Naive thymus-derived CD4-positive, alpha-beta T cell (primary cell): ENCODE measurements at regions of chr4 and their contacts with region 1.

Region 1: GRCh38 chr4:108433832-108434231 is 186.5 kb upstream of the RPL34 start:
- DNase-seq: peak in 8 of 9 donors; percentile 48 to 83 (median 72)
- ATAC-seq: peak; percentile 81
- H3K4me3 ChIP-seq: peak overlapping the region; percentile 55
- H3K4me3 Mint-ChIP-seq: peak overlapping the region; percentile 14 to 78 (median 66)
- H3K27ac ChIP-seq: peak overlapping the region; percentile 21
- H3K27ac Mint-ChIP-seq: peak overlapping the region; percentile 70 to 92 (median 86)
- H3K4me1 ChIP-seq: peaks cover 18 to 35% of the 10 kb centered on the region in 2 donors
- H3K4me1 Mint-ChIP-seq: peaks cover 26 to 86% (median 64%) of the 10 kb centered on the region in 7 donors
- H3K27me3 ChIP-seq: no peaks in the 10 kb centered on the region
- H3K27me3 Mint-ChIP-seq: peaks cover 0 to 2% (median 0%) of the 10 kb centered on the region in 5 donors

Region 2: DNA sequence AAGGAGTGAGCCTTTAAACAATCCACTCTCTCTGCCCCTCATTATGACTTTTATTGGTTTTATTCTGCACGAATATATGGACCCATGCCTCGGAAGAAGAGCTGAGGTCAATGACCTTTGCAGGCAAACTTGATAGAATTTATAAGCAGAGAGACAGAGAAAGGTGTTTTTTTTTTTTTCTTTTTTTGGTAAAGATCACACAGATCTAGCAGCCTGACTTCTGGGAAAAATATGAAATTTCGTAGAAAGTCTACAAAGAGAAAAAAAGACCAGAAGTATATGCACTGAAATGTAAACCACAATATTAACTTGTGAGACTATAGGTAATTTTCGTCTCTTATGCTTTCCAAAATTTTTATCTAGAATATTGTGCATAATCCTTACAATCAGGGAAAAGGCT is 326.7 kb before region 1 on chr4:
- CTCF ChIA-PET with region 1: no interaction called
- POLR2A ChIA-PET with region 1: no interaction called
- intact Hi-C with region 1: no loop called
- DNase-seq: peak in 3 of 9 donors; percentile 40 to 51 (median 45)
- ATAC-seq: no peak
- H3K4me3 ChIP-seq: peak overlapping the region; percentile 10
- H3K4me3 Mint-ChIP-seq: peak overlapping the region; percentile 69 to 89 (median 77)
- H3K27ac ChIP-seq: peak overlapping the region; percentile 80
- H3K27ac Mint-ChIP-seq: peak overlapping the region; percentile 75 to 98 (median 91)
- H3K4me1 ChIP-seq: peaks cover 47 to 95% of the 10 kb centered on the region in 2 donors
- H3K4me1 Mint-ChIP-seq: peaks cover 63 to 97% (median 93%) of the 10 kb centered on the region in 7 donors
- H3K27me3 ChIP-seq: no peaks in the 10 kb centered on the region
- H3K27me3 Mint-ChIP-seq: no peaks in the 10 kb centered on the region

Region 3: GRCh38 chr4:108118490-108118889 is 315.3 kb before region 1 on chr4:
- CTCF ChIA-PET with region 1: no interaction called
- POLR2A ChIA-PET with region 1: interaction called, 3 read pairs
- intact Hi-C with region 1: loop called in 1 of 2 experiments (anchors 5 kb)
- DNase-seq: peak in 1 of 9 donors; percentile 74
- ATAC-seq: peak; percentile 59
- H3K4me3 ChIP-seq: no peak overlapping the region
- H3K4me3 Mint-ChIP-seq: peak overlapping the region in 9 of 10 donors; percentile 57 to 89 (median 77)
- H3K27ac ChIP-seq: peak overlapping the region; percentile 80
- H3K27ac Mint-ChIP-seq: peak overlapping the region; percentile 84 to 98 (median 90)
- H3K4me1 ChIP-seq: peaks cover 58 to 97% of the 10 kb centered on the region in 2 donors
- H3K4me1 Mint-ChIP-seq: peaks cover 61 to 99% (median 97%) of the 10 kb centered on the region in 7 donors
- H3K27me3 ChIP-seq: no peaks in the 10 kb centered on the region
- H3K27me3 Mint-ChIP-seq: no peaks in the 10 kb centered on the region

Region 4: GRCh38 chr4:108159845-108160244 is 274.0 kb before region 1 on chr4:
- CTCF ChIA-PET with region 1: no interaction called
- POLR2A ChIA-PET with region 1: no interaction called
- intact Hi-C with region 1: no loop called
- DNase-seq: peak in 4 of 9 donors; percentile 32 to 61 (median 52)
- ATAC-seq: peak; percentile 69
- H3K4me3 ChIP-seq: peak overlapping the region; percentile 77
- H3K4me3 Mint-ChIP-seq: peak overlapping the region; percentile 83 to 100 (median 97)
- H3K27ac ChIP-seq: peak overlapping the region; percentile 87
- H3K27ac Mint-ChIP-seq: peak overlapping the region; percentile 72 to 97 (median 92)
- H3K4me1 ChIP-seq: peaks cover 40 to 41% of the 10 kb centered on the region in 2 donors
- H3K4me1 Mint-ChIP-seq: peaks cover 13 to 77% (median 54%) of the 10 kb centered on the region in 7 donors
- H3K27me3 ChIP-seq: no peaks in the 10 kb centered on the region
- H3K27me3 Mint-ChIP-seq: no peaks in the 10 kb centered on the region

Region 5: GRCh38 chr4:108287834-108288413 is 145.9 kb before region 1 on chr4:
- CTCF ChIA-PET with region 1: no interaction called
- POLR2A ChIA-PET with region 1: no interaction called
- intact Hi-C with region 1: no loop called
- DNase-seq: no peak
- ATAC-seq: no peak
- H3K4me3 ChIP-seq: no peak overlapping the region
- H3K4me3 Mint-ChIP-seq: no peak overlapping the region
- H3K27ac ChIP-seq: no peak overlapping the region
- H3K27ac Mint-ChIP-seq: peak overlapping the region in 2 of 9 donors; percentile 4 to 23
- H3K4me1 ChIP-seq: no peaks in the 10 kb centered on the region
- H3K4me1 Mint-ChIP-seq: peaks cover 4 to 39% (median 23%) of the 10 kb centered on the region in 7 donors
- H3K27me3 ChIP-seq: no peaks in the 10 kb centered on the region
- H3K27me3 Mint-ChIP-seq: peaks cover 0 to 12% (median 0%) of the 10 kb centered on the region in 5 donors

Region 6: GRCh38 chr4:108355186-108355901 is 78.5 kb before region 1 on chr4:
- CTCF ChIA-PET with region 1: no interaction called
- POLR2A ChIA-PET with region 1: no interaction called
- intact Hi-C with region 1: loop called (anchors 1 kb)
- DNase-seq: peak in 8 of 9 donors; percentile 28 to 92 (median 86)
- ATAC-seq: peak; percentile 90
- H3K4me3 ChIP-seq: peak overlapping the region; percentile 20
- H3K4me3 Mint-ChIP-seq: peak overlapping the region; percentile 57 to 87 (median 70)
- H3K27ac ChIP-seq: peak overlapping the region; percentile 86
- H3K27ac Mint-ChIP-seq: peak overlapping the region; percentile 76 to 99 (median 96)
- H3K4me1 ChIP-seq: peaks cover 17 to 59% of the 10 kb centered on the region in 2 donors
- H3K4me1 Mint-ChIP-seq: peaks cover 34 to 96% (median 83%) of the 10 kb centered on the region in 7 donors
- H3K27me3 ChIP-seq: no peaks in the 10 kb centered on the region
- H3K27me3 Mint-ChIP-seq: peaks cover 0 to 14% (median 0%) of the 10 kb centered on the region in 5 donors

Region 7: DNA sequence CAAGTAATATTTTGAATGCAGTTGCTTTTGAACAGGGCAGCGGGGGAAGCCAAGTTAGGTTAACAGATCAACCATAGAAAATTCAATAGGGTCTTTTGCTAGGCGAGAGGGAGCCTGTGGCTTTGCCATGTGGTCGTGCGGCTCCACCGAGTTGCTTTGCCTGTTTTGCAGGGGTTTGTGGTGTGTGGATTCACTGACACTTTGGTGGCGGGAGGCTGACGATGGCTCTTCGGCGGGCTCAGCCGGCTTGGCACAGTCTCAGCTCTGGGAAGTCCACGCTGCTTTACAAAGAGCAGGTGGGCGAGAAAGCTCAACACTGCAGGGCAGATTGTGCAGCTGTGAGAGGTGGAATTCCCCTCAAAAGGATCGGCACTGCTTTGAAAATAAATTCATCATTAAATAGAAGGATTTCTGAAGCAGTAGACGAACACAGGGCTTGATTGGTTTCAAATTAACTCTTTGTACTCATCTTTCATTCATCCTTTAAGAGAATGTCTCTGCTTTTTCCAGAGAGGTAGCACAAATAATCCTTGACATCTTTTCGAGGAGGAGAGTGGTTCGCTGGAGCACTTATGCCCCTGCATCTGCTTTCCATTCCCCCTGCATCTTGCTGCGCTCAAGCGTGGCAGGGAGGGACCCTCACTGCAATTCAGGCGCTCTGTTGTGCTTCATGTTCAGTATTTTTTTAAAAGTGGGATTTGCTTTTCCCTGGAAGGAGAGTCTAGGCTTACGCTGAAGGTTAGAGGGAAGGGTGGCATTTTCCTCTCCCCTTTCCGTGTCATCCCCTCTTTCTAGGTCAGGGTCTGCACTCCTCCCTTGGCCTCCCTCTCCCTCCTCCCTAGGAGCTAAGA is 63.3 kb before region 1 on chr4:
- CTCF ChIA-PET with region 1: no interaction called
- POLR2A ChIA-PET with region 1: no interaction called
- intact Hi-C with region 1: loop called in 1 of 2 experiments (anchors 5 kb)
- DNase-seq: peak in 5 of 9 donors; percentile 20 to 46 (median 30)
- ATAC-seq: peak; percentile 74
- H3K4me3 ChIP-seq: peak overlapping the region; percentile 33
- H3K4me3 Mint-ChIP-seq: peak overlapping the region; percentile 74 to 94 (median 89)
- H3K27ac ChIP-seq: peak overlapping the region; percentile 9
- H3K27ac Mint-ChIP-seq: peak overlapping the region; percentile 52 to 94 (median 84)
- H3K4me1 ChIP-seq: peaks cover 9 to 24% of the 10 kb centered on the region in 2 donors
- H3K4me1 Mint-ChIP-seq: peaks cover 34 to 82% (median 58%) of the 10 kb centered on the region in 7 donors
- H3K27me3 ChIP-seq: no peaks in the 10 kb centered on the region
- H3K27me3 Mint-ChIP-seq: peaks cover 0 to 47% (median 4%) of the 10 kb centered on the region in 5 donors

Region 8: DNA sequence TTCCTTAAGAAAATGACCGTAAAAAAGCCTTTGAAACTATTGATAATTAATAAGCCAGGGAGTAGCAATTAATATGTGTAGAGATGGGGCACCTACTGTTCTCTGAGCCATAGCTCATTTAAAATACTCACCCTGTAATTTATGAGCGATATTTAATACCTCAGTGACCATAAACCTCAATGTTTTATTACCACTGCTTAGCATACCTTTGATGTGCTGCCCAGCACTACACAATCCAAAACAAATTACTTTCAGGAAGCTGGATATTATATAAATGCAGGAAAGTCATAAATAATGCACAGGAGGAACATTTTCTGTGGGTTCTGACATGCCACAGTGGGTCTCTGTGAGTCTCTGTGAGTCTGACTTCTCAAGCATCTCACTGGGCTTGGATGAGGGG is 20.4 kb after region 1 on chr4:
- CTCF ChIA-PET with region 1: no interaction called
- POLR2A ChIA-PET with region 1: no interaction called
- intact Hi-C with region 1: no loop called
- DNase-seq: no peak
- ATAC-seq: no peak
- H3K4me3 ChIP-seq: no peak overlapping the region
- H3K4me3 Mint-ChIP-seq: no peak overlapping the region
- H3K27ac ChIP-seq: no peak overlapping the region
- H3K27ac Mint-ChIP-seq: no peak overlapping the region
- H3K4me1 ChIP-seq: peaks cover 0 to 4% of the 10 kb centered on the region in 2 donors
- H3K4me1 Mint-ChIP-seq: peaks cover 3 to 17% (median 10%) of the 10 kb centered on the region in 7 donors
- H3K27me3 ChIP-seq: no peaks in the 10 kb centered on the region
- H3K27me3 Mint-ChIP-seq: peaks cover 0 to 34% (median 0%) of the 10 kb centered on the region in 5 donors

Region 9: GRCh38 chr4:108466936-108467902 is 33.4 kb after region 1 on chr4:
- CTCF ChIA-PET with region 1: interaction called, 3 read pairs
- POLR2A ChIA-PET with region 1: interaction called, 5 read pairs
- intact Hi-C with region 1: loop called (anchors 1 to 2 kb)
- DNase-seq: peak in 7 of 9 donors; percentile 42 to 69 (median 61)
- ATAC-seq: peak; percentile 80
- H3K4me3 ChIP-seq: peak overlapping the region; percentile 22
- H3K4me3 Mint-ChIP-seq: peak overlapping the region; percentile 65 to 90 (median 82)
- H3K27ac ChIP-seq: peak overlapping the region; percentile 52
- H3K27ac Mint-ChIP-seq: peak overlapping the region; percentile 85 to 99 (median 95)
- H3K4me1 ChIP-seq: peaks cover 0 to 37% of the 10 kb centered on the region in 2 donors
- H3K4me1 Mint-ChIP-seq: peaks cover 22 to 74% (median 65%) of the 10 kb centered on the region in 7 donors
- H3K27me3 ChIP-seq: no peaks in the 10 kb centered on the region
- H3K27me3 Mint-ChIP-seq: no peaks in the 10 kb centered on the region

Region 10: DNA sequence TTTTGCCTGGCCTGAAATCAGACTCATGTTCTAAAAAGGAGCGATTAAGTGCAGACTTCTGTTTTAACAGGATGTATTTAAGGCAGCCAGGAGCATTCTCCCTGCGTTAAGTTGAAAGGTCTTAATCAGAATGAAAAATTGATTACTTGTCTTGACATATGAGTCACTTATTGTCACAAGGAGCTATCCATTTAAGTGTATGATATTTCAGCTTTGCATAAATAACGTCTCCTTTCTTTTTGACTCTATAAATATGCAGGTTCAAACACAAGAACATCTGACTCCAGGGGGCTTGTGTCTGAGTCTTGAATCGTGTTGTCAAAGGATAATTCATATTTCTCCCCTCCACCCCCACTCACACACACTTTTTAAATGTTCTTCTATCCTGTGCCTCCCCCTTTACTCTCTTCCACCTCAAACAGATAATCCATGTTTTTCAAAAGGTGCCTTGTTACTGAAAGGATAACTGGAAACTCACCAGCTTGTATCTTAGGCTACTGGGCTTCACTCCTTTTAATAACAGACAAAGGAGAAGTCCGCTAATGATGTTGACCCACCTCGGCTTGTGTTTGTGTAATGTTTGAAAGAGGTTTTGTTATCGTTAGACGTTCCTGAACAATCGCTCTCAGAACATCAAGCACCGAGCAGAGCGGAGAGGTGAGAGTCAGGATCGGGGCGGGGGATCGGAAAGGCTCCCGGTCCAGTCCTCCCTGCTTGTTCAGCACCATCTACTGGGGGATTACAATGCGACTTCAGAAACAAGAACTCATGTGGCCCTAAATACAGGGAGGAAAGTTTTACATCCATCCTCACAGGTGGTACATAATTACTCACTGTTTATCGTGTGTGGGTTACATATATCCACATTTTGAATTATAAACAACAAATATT is 79.0 kb after region 1 on chr4:
- CTCF ChIA-PET with region 1: no interaction called
- POLR2A ChIA-PET with region 1: no interaction called
- intact Hi-C with region 1: loop called in 1 of 2 experiments (anchors 5 kb)
- DNase-seq: peak in 7 of 9 donors; percentile 42 to 68 (median 58)
- ATAC-seq: peak; percentile 82
- H3K4me3 ChIP-seq: peak overlapping the region; percentile 6
- H3K4me3 Mint-ChIP-seq: peak overlapping the region; percentile 72 to 87 (median 80)
- H3K27ac ChIP-seq: no peak overlapping the region
- H3K27ac Mint-ChIP-seq: peak overlapping the region in 7 of 9 donors; percentile 33 to 79 (median 71)
- H3K4me1 ChIP-seq: peaks cover 0 to 10% of the 10 kb centered on the region in 2 donors
- H3K4me1 Mint-ChIP-seq: peaks cover 9 to 37% (median 23%) of the 10 kb centered on the region in 7 donors
- H3K27me3 ChIP-seq: no peaks in the 10 kb centered on the region
- H3K27me3 Mint-ChIP-seq: peaks cover 0 to 11% (median 0%) of the 10 kb centered on the region in 5 donors